Activated CD4-positive, alpha-beta T cell treated with anti-CD3 and anti-CD28 coated beads, Interleukin-2, amount 10 ng/mL, durations not matched to agents 24 days and 14 days (primary cell): ENCODE measurements at regions of chr14 and their contacts with region 1.

Region 1: DNA sequence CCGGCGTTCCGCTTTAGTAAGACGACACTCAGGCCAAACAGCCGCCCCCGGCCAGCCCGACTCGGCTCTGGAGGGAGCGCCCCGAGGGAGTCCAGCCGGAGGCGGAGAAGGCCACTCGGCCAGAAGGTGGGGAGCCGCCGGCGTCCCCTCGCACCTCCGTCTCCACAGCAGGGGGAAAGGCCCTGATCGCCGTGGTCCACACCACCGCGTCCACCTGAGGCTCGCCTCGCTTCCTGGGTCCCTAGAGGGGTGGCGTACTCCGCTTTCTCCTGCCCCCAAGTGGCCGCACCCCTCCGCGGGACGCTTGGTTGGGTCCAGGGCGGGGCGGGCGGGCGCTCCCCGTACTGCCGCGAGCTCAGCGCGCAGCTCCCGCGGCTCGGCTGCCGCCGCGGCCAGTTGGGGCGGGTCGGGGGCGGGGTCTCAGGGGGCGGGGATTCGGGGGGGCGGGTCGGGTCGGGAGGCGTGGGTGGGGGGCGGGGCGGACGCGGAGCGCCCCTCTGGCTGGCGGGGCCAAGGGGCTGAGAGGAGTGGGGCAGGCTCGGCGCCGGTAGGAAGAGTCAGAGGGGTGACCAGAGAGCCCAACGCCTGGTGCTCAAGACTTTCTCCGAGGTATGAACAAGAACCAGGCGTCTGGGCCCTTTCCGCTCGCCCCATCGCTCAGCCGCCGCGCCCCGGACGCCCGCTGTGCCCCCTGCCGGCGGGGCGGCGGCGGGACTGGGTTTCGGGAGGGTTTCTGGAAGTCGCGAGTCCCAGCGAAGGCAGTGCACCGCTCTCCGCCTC is at the start of gene FRMD6:
- DNase-seq: peak; percentile 94
- H3K4me3 Mint-ChIP-seq: peak within 1 kb of the TSS; percentile 88
- H3K27ac Mint-ChIP-seq: peak within 1 kb of the TSS; percentile 78
- H3K4me1 Mint-ChIP-seq: peaks cover 19% of the 10 kb centered on the region
- H3K27me3 Mint-ChIP-seq: peaks cover 17% of the 10 kb centered on the region
- total RNA-seq, gene FRMD6: 5.5 and 7.4 TPM in 2 replicates

Region 2: GRCh38 chr14:51239813-51240803 is 411.5 kb before region 1 on chr14 and contains the start of gene TMX1:
- intact Hi-C with region 1: loop called (anchors 5 kb)
- DNase-seq: peak; percentile 97
- H3K4me3 Mint-ChIP-seq: no peak within 1 kb of the TSS
- H3K27ac Mint-ChIP-seq: no peak within 1 kb of the TSS
- H3K4me1 Mint-ChIP-seq: peaks cover 32% of the 10 kb centered on the region
- H3K27me3 Mint-ChIP-seq: no peaks in the 10 kb centered on the region
- total RNA-seq, gene TMX1: 53.1 and 53.6 TPM in 2 replicates

Region 3: DNA sequence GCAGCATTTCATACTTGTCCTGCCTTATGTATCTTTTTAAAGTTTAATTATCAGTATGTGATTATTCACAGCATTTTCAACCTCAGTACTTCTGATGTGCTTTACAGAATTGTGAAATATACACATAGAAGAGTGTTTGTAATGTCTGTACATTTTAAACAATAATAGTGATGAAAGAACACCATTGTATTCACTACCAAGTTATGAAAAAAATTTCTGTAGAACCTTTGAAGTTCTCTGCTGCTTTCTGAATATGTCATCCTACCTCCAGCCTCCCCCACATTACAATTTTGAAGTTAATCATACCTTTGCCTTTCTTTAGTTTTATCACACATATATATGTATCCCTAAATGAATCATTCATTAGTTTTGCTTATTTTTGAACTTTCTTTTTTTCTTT is 25.0 kb after region 1 on chr14:
- intact Hi-C with region 1: loop called (anchors 1 kb)
- DNase-seq: no peak
- H3K4me3 Mint-ChIP-seq: no peak overlapping the region
- H3K27ac Mint-ChIP-seq: no peak overlapping the region
- H3K4me1 Mint-ChIP-seq: peaks cover 10% of the 10 kb centered on the region
- H3K27me3 Mint-ChIP-seq: peaks cover 6% of the 10 kb centered on the region

Region 4: DNA sequence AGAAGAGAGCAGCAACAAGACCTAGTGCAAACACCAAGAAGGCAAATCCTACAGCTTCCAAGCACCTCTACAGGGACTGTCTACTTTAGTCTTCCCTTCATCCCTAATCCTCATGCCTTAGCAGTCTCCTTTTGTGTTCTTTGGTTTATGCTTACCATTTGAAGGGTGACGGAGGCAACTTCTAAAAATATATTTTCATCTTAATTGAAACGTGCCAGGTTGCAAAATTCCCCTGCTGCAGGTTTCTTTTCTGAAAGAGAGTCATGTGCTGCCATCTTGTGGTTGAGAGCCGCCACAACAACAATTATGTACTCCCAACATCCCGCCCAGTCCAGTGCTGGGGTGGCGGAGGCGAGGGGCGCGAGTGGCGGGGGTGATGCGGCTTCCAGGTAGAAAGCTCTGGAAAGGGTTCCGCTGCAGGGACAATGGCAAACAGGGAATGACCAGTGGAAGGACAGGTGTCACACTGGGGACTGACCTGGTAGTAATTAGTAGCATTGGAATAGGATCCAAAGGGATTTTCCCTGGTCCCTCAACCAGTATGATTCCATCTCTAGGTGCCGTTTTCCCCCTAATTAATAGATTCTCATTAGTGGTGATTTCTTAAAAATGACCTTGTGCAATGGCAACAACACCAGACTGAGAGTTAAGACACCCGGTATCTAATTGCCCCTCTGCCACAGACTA is 128.6 kb after region 1 on chr14:
- intact Hi-C with region 1: loop called (anchors 2 kb)
- DNase-seq: peak; percentile 91
- H3K4me3 Mint-ChIP-seq: peak overlapping the region; percentile 30
- H3K27ac Mint-ChIP-seq: no peak overlapping the region
- H3K4me1 Mint-ChIP-seq: peaks cover 12% of the 10 kb centered on the region
- H3K27me3 Mint-ChIP-seq: peaks cover 40% of the 10 kb centered on the region

Region 5: DNA sequence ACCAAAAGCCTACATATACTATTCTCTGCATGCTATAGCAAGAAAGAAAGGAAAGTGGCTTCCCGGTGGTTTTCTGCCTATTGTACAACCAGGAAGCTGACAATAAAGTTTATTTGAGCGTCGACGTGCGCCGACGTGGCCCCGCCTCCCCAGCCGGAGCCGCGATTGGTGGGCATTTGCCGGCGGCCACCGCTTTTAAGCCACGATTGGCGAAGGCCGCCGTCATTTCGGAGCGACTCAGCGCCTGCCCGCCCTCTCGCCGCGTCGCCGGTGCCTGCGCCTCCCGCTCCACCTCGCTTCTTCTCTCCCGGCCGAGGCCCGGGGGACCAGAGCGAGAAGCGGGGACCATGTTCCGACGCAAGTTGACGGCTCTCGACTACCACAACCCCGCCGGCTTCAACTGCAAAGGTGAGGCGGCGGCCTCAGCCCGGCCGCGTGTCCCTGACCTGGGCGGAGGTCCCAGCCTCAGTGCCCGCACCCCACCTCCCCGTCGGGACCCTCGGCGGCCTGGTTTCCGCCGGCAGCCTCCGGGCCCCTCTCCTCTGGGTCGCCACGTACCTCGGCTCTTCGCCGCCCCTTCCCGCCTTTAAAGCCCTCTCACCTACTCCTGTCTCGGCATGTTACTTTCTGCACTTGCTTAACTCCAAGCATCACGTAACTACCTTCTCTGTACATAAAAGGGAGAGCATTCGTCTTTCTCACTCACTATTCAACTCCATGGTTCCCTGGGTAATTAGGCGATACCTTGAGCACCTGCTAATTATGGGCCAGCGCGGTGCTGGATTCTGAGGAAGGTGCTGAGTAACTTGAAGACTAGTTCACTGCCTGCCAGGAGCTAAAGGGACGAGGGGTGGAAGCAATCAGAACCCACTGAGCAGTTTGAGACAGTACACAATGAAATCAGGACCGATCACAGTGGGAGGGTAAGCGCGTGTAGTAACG is 338.0 kb after region 1 on chr14 and contains the start of gene RTRAF:
- intact Hi-C with region 1: loop called (anchors 5 kb)
- DNase-seq: peak; percentile 98
- H3K4me3 Mint-ChIP-seq: peak within 1 kb of the TSS; percentile 93
- H3K27ac Mint-ChIP-seq: peak within 1 kb of the TSS; percentile 96
- H3K4me1 Mint-ChIP-seq: peaks cover 18% of the 10 kb centered on the region
- H3K27me3 Mint-ChIP-seq: no peaks in the 10 kb centered on the region
- total RNA-seq, gene RTRAF: 226 and 229 TPM in 2 replicates